ENCODE measurements at regions of chr6 and their contacts with region 1.

Region 1: GRCh38 chr6:40997256-40997957 is 41.6 kb downstream of the UNC5CL start:
- DNase-seq: peak; percentile 72 to 89
- H3K4me3 ChIP-seq: no peak overlapping the region
- H3K27ac ChIP-seq: peak overlapping the region; percentile 49
- H3K4me1 ChIP-seq: peaks cover 30% of the 10 kb centered on the region
- H3K27me3 ChIP-seq: 0 out of 2 replicates have a peak, but pooled peaks cover under 1% of the 10 kb centered on the region
- CTCF ChIP-seq: no peak

Region 2: GRCh38 chr6:40819182-40819834 is 178.1 kb before region 1 on chr6:
- CTCF ChIA-PET with region 1: no interaction called
- POLR2A ChIA-PET with region 1: no interaction called
- intact Hi-C with region 1: no loop called
- DNase-seq: no peak
- H3K4me3 ChIP-seq: no peak overlapping the region
- H3K27ac ChIP-seq: no peak overlapping the region
- H3K4me1 ChIP-seq: no peaks in the 10 kb centered on the region
- H3K27me3 ChIP-seq: peaks cover 3% of the 10 kb centered on the region; the same call in 1 of the 2 replicates
- CTCF ChIP-seq: no peak

Region 3: DNA sequence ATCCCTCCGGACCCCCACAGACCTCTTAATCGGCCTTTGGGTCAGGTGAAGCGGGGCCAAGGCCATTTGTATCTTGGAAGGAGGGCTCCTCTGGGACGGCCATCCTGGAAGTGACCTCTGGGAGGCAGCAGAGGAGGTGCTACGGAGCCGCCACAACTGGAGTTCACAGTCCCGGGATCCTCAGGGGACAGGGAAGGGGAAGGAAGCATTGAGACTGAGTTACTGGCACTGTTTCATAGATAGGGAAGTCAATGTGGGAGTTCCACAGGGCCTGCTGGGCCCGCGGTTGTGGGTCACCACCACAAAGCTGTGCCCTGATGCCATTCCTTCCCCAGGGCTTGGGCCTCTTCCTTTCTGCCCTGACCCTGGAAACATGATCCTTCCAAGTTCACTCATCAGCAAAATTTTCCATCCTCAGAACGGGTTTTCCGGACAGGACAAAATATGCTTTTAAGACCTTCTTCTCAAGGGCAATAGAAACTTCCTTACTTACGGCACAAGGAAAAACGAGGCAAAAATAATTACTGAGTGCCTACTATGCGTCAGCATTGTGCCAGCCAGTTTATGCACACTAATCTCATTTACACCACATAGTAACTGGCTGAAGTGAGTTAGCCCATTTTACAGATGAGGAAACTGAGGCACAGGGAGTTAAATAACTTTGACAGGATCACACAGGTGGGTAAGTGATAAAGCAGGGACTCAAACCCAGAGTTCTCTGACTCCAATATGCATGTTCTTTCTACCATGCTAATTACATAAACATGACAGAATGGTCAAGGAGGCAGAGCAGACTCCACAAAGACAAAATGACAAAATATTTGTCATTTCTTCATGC is 102.2 kb before region 1 on chr6:
- CTCF ChIA-PET with region 1: no interaction called
- POLR2A ChIA-PET with region 1: no interaction called
- intact Hi-C with region 1: no loop called
- DNase-seq: peak in 1 of 2 experiments; percentile 58
- H3K4me3 ChIP-seq: no peak overlapping the region
- H3K27ac ChIP-seq: no peak overlapping the region
- H3K4me1 ChIP-seq: no peaks in the 10 kb centered on the region
- H3K27me3 ChIP-seq: peaks cover 44% of the 10 kb centered on the region
- CTCF ChIP-seq: peak; percentile 74

Region 4: DNA sequence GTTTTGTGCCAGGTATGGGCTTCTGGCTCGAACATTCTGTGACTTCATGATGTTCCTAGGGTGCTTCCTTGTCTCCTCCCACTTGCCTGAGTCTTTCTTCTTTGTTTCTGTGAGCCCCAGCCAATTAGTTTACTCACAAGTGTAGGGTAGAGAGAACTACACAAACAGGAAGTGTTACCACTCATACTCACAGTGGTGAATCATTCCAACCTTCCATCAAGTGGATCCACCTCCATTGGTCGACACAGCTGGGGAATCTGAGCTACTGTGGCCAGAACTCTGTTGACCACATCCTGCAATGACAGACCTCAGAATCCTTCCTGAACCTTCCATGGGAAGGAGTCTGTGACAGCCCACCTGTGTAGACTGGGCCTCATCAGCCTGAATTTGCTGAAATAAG is 35.2 kb before region 1 on chr6:
- CTCF ChIA-PET with region 1: interaction called, 3 read pairs
- POLR2A ChIA-PET with region 1: no interaction called
- intact Hi-C with region 1: loop called (anchors 1 kb)
- DNase-seq: peak; percentile 58 to 88
- H3K4me3 ChIP-seq: no peak overlapping the region
- H3K27ac ChIP-seq: peak overlapping the region; percentile 47
- H3K4me1 ChIP-seq: peaks cover 13% of the 10 kb centered on the region; the same call in 1 of the 2 replicates
- H3K27me3 ChIP-seq: no peaks in the 10 kb centered on the region
- CTCF ChIP-seq: no peak

Region 5: DNA sequence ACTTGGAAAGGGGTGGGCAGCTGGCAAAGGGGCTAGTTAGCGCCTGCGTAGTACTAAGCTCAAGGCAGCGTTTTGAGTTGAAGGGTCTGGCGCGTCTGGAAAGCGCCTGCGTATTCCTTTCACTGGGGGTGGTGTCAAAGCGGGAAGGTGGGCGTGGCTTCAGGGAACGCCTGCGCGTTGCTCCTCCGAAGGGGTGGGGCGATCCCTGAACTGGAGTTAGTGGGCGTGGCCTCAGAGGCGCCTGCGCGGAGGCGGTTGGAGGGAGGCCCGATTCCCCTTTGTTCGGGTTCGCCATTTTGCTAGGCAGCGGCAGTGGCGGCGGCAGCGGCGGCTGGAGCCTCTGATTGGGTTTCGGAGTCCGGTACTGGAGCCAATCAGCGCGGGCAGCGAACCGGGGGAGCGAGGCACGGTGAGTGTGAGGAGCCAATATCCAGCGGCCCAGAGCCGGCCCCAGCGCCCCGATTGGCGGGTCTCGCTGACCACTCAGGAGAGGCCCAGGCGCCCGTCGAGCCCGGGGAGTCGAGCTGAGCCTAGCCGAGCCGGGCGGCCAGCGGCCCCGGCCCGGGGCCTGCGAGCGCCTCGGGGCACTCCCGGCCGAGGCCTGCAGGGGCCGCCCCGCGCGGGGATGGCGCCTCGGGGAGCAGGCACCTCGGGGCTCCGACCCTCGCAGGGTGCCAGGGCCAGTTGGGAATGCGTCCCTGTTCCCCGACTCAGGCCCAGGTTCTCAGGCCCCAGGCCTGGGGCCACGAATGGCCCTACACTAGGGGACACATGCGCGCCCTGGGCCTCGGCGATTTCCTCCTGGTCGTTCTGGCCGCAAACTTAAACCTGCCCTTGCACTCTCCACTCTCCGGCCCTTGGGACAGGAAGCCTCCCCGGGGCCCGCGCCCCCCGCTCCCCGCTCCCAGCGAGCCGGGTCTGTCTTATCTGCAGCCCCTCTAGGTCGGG is 75.5 kb after region 1 on chr6 and contains the start of gene NFYA:
- CTCF ChIA-PET with region 1: interaction called, 4 read pairs
- POLR2A ChIA-PET with region 1: no interaction called
- intact Hi-C with region 1: loop called (anchors 1 kb)
- DNase-seq: peak; percentile 95 to 99
- H3K4me3 ChIP-seq: peak within 1 kb of the TSS; percentile 82
- H3K27ac ChIP-seq: peak within 1 kb of the TSS; percentile 96
- H3K4me1 ChIP-seq: peaks cover 32% of the 10 kb centered on the region
- H3K27me3 ChIP-seq: no peaks in the 10 kb centered on the region
- CTCF ChIP-seq: no peak
- total RNA-seq, gene NFYA: 27.3 and 31.9 TPM in 2 replicates

Measured in PC-9 (cell line).